K562 (cell line): ENCODE measurements at regions of chr15 and their contacts with region 1.

Region 1: GRCh38 chr15:40857601-40858341 is 13.9 kb downstream of the SPINT1 start:
- DNase-seq: peak; percentile 83 to 89 (median 84)
- ATAC-seq: peak; percentile 92
- H3K4me3 ChIP-seq: no peak overlapping the region
- H3K27ac ChIP-seq: no peak overlapping the region
- H3K4me1 ChIP-seq: peaks cover 16 to 25% of the 10 kb centered on the region in 2 experiments; a peak in 4 of 5 replicates
- H3K27me3 ChIP-seq: no peaks in the 10 kb centered on the region; a peak in 1 of 5 replicates
- CTCF ChIP-seq: peak; percentile 94 to 98 (median 95)
- EP300 ChIP-seq: no peak
- POLR2A ChIP-seq: no peak
- RAD21 ChIP-seq: peak; percentile 74 to 86

Region 2: GRCh38 chr15:40684381-40684780 is 173.4 kb before region 1 on chr15:
- CTCF ChIA-PET with region 1: no interaction called
- POLR2A ChIA-PET with region 1: no interaction called
- in situ Hi-C with region 1: no loop called
- intact Hi-C with region 1: loop called (anchors 10 kb)
- DNase-seq: no peak
- ATAC-seq: no peak
- H3K4me3 ChIP-seq: no peak overlapping the region
- H3K27ac ChIP-seq: no peak overlapping the region
- H3K4me1 ChIP-seq: no peaks in the 10 kb centered on the region
- H3K27me3 ChIP-seq: no peaks in the 10 kb centered on the region
- CTCF ChIP-seq: no peak
- EP300 ChIP-seq: no peak
- POLR2A ChIP-seq: no peak
- RAD21 ChIP-seq: no peak

Region 3: DNA sequence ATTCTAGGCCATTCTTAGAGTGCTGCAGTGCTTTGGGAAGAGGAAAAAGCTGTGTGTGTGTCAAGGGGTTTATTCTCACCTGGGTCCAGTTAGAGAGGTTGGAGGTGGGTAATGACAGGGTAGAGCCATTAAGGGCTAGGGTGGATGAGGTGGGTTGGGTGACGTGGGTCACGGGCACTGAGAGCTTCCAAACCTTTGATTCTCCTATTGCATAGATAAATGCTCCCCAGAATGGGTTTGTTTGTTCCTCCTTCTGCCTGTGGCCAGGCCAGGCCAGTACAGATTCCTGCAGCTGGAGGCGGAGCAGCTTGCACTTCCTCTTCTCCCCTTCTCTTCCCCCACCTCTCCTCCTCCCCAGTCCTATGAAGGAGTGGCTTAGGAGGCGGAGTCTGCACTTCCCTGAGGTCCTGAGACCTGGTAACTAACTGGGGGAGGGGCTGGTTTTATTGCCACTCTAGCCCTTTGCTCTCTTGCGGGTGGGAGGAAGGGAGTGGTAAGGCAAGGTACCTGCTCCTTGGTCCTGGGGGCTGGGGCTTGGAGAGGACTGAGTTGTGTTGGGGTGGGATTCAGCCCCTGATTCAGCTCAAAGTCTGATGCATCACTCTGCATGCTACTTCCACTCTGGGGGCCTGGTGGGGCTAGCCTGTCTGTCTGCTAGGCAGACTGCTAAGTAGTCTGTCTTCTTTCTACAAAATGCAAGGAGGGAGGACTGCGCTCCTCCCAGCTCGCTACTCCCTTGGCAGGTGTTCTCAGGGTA is 10.4 kb before region 1 on chr15:
- CTCF ChIA-PET with region 1: no interaction called
- POLR2A ChIA-PET with region 1: interaction called, 12 read pairs
- in situ Hi-C with region 1: no loop called
- intact Hi-C with region 1: no loop called
- DNase-seq: peak; percentile 88 to 95 (median 90)
- ATAC-seq: peak; percentile 99
- H3K4me3 ChIP-seq: no peak overlapping the region
- H3K27ac ChIP-seq: peak overlapping the region; percentile 68
- H3K4me1 ChIP-seq: peaks cover 29 to 41% of the 10 kb centered on the region in 2 experiments
- H3K27me3 ChIP-seq: no peaks in the 10 kb centered on the region
- CTCF ChIP-seq: peak; percentile 10 to 20 (median 15); a peak in 2 of 6 replicates
- EP300 ChIP-seq: peak; percentile 44; the same call in 1 of the 2 replicates
- POLR2A ChIP-seq: peak; percentile 54
- RAD21 ChIP-seq: no peak

Region 4: GRCh38 chr15:40873625-40874561 is 16.1 kb after region 1 on chr15 and contains the start of gene RHOV:
- CTCF ChIA-PET with region 1: interaction called, 8 read pairs
- POLR2A ChIA-PET with region 1: interaction called, 72 read pairs
- in situ Hi-C with region 1: no loop called
- intact Hi-C with region 1: no loop called
- DNase-seq: peak; percentile 86 to 94 (median 90)
- ATAC-seq: peak; percentile 97
- H3K4me3 ChIP-seq: peak within 1 kb of the TSS; percentile 70
- H3K27ac ChIP-seq: peak within 1 kb of the TSS; percentile 56; the same call in 2 of the 3 replicates
- H3K4me1 ChIP-seq: peaks cover 14 to 24% of the 10 kb centered on the region in 2 experiments; a peak in 4 of 5 replicates
- H3K27me3 ChIP-seq: no peaks in the 10 kb centered on the region
- CTCF ChIP-seq: peak; percentile 66 to 73 (median 68); a peak in 5 of 6 replicates
- EP300 ChIP-seq: no peak
- POLR2A ChIP-seq: no peak
- RAD21 ChIP-seq: 0 out of 4 replicates have a peak, but pooled peaks of 1 of the 2 experiments have one; percentile 38
- polyA plus RNA-seq, gene RHOV: 0.08 to 0.18 TPM